ENCODE measurements at regions of chr1 and their contacts with region 1.

Region 1: DNA sequence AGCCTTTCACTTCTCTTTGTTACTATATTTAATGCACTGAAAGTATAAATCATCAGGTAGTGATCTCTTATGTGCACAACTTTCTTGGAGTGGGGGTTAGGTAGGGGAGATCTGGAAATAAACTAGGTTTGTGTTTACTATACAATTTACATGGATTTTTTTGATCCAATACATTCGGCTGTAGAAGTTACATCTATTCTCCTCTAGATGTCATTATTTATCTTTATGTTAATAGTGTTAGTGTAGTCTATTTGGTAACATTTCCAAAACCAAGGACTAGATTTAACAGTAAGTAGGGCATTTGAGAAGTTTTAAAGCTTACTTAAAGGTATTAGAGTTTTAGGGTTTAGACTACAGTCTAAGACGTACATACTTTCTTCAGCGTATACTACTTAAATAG is 5.4 kb downstream of the VPS45 start:
- DNase-seq: peak; percentile 42 to 67 (median 55)
- H3K4me3 ChIP-seq: no peak overlapping the region
- H3K27ac ChIP-seq: no peak overlapping the region
- H3K4me1 ChIP-seq: peaks cover 6 to 11% (median 9%) of the 10 kb centered on the region in 4 experiments
- H3K27me3 ChIP-seq: no peaks in the 10 kb centered on the region

Region 2: DNA sequence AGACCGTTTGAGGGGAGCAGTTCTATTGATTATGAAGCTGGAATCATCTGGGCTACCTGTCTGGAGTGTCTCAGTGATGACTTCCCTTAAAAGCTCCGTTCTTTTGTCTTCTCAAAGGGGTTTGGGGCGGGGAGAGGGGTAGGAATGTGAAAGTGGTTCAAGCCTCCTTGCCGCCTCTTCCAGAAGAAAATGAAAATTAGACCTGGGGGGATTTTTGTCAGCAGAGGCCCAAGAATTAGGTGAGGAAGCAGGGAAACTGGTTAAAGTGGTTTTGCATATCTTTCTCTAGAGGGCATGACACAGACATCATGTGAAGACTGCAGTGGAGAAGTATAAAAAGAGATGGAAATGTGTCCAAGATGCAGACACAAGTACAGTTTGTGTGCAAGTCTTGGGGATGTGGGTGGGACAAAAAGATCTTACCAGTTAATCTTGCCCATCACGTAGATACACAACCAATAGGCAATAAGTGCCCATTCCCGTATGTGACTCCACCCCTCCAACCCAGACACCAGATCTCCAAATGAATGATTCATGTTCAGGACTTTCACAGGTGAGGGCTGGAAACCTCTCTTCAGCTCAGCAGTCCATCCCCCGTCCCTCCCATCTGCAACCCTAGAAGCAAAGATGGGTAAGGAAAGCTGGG is 135.8 kb before region 1 on chr1:
- CTCF ChIA-PET with region 1: no interaction called
- POLR2A ChIA-PET with region 1: no interaction called
- DNase-seq: peak in 1 of 3 donors; percentile 8
- H3K4me3 ChIP-seq: no peak overlapping the region
- H3K27ac ChIP-seq: no peak overlapping the region
- H3K4me1 ChIP-seq: peaks cover 0 to 24% (median 13%) of the 10 kb centered on the region in 4 experiments
- H3K27me3 ChIP-seq: no peaks in the 10 kb centered on the region

Region 3: GRCh38 chr1:150162862-150163706 is 90.1 kb after region 1 on chr1:
- CTCF ChIA-PET with region 1: interaction called, 174 read pairs
- POLR2A ChIA-PET with region 1: interaction called, 4 read pairs
- DNase-seq: peak; percentile 71 to 91 (median 91)
- H3K4me3 ChIP-seq: peak overlapping the region in 6 of 7 experiments; percentile 15 to 67 (median 44)
- H3K27ac ChIP-seq: peak overlapping the region in 1 of 2 experiments; percentile 74
- H3K4me1 ChIP-seq: peaks cover 43 to 79% (median 76%) of the 10 kb centered on the region in 4 experiments
- H3K27me3 ChIP-seq: no peaks in the 10 kb centered on the region

Region 4: GRCh38 chr1:150186789-150187559 is 114.0 kb after region 1 on chr1:
- CTCF ChIA-PET with region 1: interaction called, 28 read pairs
- POLR2A ChIA-PET with region 1: interaction called, 3 read pairs
- DNase-seq: peak; percentile 83 to 90 (median 88)
- H3K4me3 ChIP-seq: peak overlapping the region in 6 of 7 experiments; percentile 2 to 80 (median 56)
- H3K27ac ChIP-seq: peak overlapping the region; percentile 30 to 88
- H3K4me1 ChIP-seq: peaks cover 2 to 12% (median 9%) of the 10 kb centered on the region in 4 experiments
- H3K27me3 ChIP-seq: no peaks in the 10 kb centered on the region